ENCODE measurements at regions of chr22 and their contacts with region 1.

Region 1: GRCh38 chr22:25318081-25318823 is 98.8 kb downstream of the CRYBB2 start:
- DNase-seq: no peak
- H3K4me3 ChIP-seq: no peak overlapping the region
- H3K27ac ChIP-seq: no peak overlapping the region
- H3K4me1 ChIP-seq: no peaks in the 10 kb centered on the region
- CTCF ChIP-seq: no peak

Region 2: GRCh38 chr22:25021976-25022711 is 296.1 kb before region 1 on chr22:
- CTCF ChIA-PET with region 1: no interaction called
- POLR2A ChIA-PET with region 1: interaction called, 13 read pairs
- intact Hi-C with region 1: no loop called
- DNase-seq: no peak
- H3K4me3 ChIP-seq: no peak overlapping the region
- H3K27ac ChIP-seq: no peak overlapping the region
- H3K4me1 ChIP-seq: no peaks in the 10 kb centered on the region
- CTCF ChIP-seq: no peak